ENCODE measurements at regions of chr10 and their contacts with region 1.

Region 1: GRCh38 chr10:29443745-29444523 is 155.1 kb downstream of the LYZL1 start:
- DNase-seq: peak in 1 of 2 experiments; percentile 67
- H3K4me3 ChIP-seq: no peak overlapping the region
- H3K4me3 Mint-ChIP-seq: no peak overlapping the region
- H3K27ac Mint-ChIP-seq: no peak overlapping the region
- H3K4me1 ChIP-seq: no peaks in the 10 kb centered on the region
- H3K4me1 Mint-ChIP-seq: peaks cover 4% of the 10 kb centered on the region
- H3K27me3 ChIP-seq: no peaks in the 10 kb centered on the region
- H3K27me3 Mint-ChIP-seq: no peaks in the 10 kb centered on the region
- CTCF ChIP-seq: no peak

Region 2: DNA sequence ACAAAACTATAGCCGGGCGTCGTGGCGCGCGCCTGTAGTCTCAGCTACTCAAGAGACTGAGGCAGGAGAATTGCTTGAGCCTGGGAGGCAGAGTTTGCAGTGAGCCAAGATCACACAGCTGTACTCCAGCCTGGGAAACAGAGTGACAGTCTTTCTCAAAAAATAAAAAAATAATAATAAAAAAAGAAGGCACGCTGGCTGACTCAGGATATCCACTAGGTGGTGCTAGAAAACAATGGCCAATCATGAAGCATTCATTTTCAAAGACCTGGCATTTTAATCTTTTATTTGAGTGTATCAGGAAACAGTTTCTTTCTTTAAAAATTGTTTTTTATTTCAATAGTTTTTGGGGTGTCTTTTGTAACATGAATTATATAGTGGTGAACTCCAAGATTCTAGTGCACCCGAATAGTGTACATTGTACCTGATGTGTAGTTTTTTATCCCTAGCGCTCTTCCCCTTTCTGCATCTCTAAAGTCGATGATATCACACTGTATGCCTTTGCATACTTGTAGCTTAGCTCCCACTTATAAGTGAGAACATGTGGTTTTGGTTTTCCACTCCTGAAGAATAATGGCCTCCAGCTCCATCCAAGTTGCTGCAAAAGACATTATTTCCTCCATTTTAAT is 66.5 kb before region 1 on chr10:
- CTCF ChIA-PET with region 1: interaction called, 3 read pairs
- POLR2A ChIA-PET with region 1: no interaction called
- intact Hi-C with region 1: loop called (anchors 1 kb)
- DNase-seq: peak in 1 of 2 experiments; percentile 42
- H3K4me3 ChIP-seq: no peak overlapping the region
- H3K4me3 Mint-ChIP-seq: no peak overlapping the region
- H3K27ac Mint-ChIP-seq: no peak overlapping the region
- H3K4me1 ChIP-seq: no peaks in the 10 kb centered on the region
- H3K4me1 Mint-ChIP-seq: no peaks in the 10 kb centered on the region
- H3K27me3 ChIP-seq: no peaks in the 10 kb centered on the region
- H3K27me3 Mint-ChIP-seq: no peaks in the 10 kb centered on the region
- CTCF ChIP-seq: peak; percentile 83

Region 3: DNA sequence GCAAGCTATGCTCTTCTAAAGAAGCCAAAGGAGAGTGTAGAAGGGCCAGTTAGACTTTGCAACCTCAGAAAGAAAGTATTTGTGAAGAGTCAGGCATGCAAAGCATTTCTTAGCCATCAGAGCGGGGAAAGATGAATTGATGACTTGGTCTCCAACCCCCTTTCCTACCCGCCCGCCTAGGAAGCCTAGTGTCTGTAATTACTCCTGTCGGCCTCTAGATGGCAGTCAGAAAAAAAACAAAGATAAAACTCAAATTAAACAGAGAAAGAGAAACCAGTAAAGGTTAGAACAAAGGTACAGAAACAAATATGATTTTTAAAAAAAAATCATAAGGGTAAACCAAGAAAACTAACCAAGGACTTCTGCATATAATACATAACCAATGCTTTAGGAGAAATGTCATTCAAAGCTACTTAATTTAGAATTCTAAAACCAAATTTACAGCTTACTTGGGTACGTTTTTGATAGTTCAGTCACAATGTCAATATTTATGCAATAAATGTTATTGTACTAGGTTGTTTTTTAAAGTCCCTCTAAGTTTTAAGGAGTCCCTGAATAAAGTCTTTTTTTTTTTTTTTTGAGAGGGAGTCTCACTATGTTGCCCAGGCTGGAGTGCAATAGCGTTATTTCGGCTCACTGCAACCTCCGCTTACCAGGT is 57.5 kb before region 1 on chr10:
- CTCF ChIA-PET with region 1: interaction called, 3 read pairs
- POLR2A ChIA-PET with region 1: no interaction called
- intact Hi-C with region 1: loop called (anchors 1 kb)
- DNase-seq: peak in 1 of 2 experiments; percentile 57
- H3K4me3 ChIP-seq: no peak overlapping the region
- H3K4me3 Mint-ChIP-seq: no peak overlapping the region
- H3K27ac Mint-ChIP-seq: no peak overlapping the region
- H3K4me1 ChIP-seq: 0 out of 2 replicates have a peak, but pooled peaks cover 3% of the 10 kb centered on the region
- H3K4me1 Mint-ChIP-seq: peaks cover 7% of the 10 kb centered on the region
- H3K27me3 ChIP-seq: no peaks in the 10 kb centered on the region
- H3K27me3 Mint-ChIP-seq: no peaks in the 10 kb centered on the region
- CTCF ChIP-seq: peak; percentile 83 to 86

Region 4: GRCh38 chr10:29430101-29430500 is 13.8 kb before region 1 on chr10:
- CTCF ChIA-PET with region 1: no interaction called
- POLR2A ChIA-PET with region 1: no interaction called
- intact Hi-C with region 1: loop called (anchors 1 kb)
- DNase-seq: no peak
- H3K4me3 ChIP-seq: no peak overlapping the region
- H3K4me3 Mint-ChIP-seq: no peak overlapping the region
- H3K27ac Mint-ChIP-seq: no peak overlapping the region
- H3K4me1 ChIP-seq: no peaks in the 10 kb centered on the region
- H3K4me1 Mint-ChIP-seq: no peaks in the 10 kb centered on the region
- H3K27me3 ChIP-seq: no peaks in the 10 kb centered on the region
- H3K27me3 Mint-ChIP-seq: no peaks in the 10 kb centered on the region
- CTCF ChIP-seq: no peak

Measured in Caco-2 (cell line).